GM10248 (cell line): ENCODE measurements at regions of chr19 and their contacts with region 1.

Region 1: DNA sequence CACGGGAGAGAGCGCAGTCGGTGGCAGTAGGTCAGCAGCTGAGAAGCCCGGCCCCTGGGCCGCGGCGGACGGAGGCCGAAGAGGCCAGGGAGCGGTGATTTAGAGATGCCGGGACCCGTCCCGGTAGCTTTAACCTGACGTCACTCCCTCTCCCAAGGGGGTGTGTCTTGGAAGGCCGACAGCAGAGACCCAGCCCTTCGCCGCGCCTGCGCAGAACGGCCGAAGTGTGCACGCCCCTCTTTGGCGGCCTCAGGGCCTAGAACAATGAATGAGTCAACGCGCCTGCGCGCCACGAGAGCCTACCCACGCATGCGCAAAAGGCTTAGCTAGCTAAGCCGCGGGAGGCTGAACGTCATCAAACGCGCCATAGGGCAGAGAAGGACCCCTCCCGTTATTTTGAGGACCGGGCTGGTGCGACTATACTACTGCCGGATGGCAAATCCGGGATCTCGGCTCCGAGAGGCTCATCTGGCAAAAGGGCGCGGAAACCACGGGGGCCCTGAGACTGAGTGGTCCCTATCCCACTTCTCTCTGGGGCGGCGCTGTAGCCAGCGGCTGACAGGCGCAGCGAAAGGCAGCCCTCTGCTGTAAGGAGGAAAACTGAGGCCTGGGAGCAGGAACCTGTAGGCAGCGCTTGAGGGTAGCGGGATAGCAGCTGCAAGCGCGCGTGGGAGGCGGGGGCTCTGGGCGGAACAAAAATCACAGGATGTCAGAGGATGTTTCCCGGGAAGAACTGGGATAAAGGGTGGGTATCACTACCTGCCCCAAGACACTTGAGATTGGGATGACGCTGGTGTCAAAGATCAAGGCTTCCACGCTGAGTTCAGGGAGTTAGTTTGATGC is at the starts of genes IRGQ and ZNF576:
- DNase-seq: peak; percentile 99
- CTCF ChIP-seq: no peak

Region 2: DNA sequence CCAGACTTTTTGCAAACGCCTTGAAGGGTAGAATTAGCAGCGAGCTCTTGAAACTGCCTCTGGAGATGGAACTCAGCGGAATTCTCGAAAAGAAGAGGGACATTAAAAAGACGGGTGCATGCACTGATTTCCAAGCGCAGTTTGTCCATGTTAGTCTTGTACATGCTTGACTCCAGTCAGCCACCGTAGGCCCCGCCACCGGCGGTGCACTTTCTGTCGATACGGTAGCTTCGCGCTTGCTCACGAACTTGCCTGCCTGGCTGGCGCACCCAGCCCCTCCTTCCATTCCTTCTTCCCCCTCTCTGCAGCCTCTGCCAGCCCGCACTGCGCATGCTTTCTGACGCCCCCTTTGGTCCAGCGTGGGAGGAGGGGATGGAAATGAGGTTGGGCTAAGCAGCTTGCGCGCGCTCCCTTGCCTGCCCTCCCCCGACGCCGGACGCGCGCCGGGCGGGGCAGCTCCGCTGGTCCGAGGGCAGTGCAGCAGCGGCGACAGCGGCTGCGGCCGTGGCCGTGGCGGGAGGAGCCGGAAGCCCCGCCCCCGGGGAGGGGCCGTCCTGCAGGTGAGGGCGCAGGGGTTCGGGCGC is 63.2 kb before region 1 on chr19 and contains the start of gene ZNF575:
- CTCF ChIA-PET with region 1: interaction called, 46 read pairs
- POLR2A ChIA-PET with region 1: interaction called, 4 read pairs
- DNase-seq: peak; percentile 92
- CTCF ChIP-seq: no peak

Region 3: DNA sequence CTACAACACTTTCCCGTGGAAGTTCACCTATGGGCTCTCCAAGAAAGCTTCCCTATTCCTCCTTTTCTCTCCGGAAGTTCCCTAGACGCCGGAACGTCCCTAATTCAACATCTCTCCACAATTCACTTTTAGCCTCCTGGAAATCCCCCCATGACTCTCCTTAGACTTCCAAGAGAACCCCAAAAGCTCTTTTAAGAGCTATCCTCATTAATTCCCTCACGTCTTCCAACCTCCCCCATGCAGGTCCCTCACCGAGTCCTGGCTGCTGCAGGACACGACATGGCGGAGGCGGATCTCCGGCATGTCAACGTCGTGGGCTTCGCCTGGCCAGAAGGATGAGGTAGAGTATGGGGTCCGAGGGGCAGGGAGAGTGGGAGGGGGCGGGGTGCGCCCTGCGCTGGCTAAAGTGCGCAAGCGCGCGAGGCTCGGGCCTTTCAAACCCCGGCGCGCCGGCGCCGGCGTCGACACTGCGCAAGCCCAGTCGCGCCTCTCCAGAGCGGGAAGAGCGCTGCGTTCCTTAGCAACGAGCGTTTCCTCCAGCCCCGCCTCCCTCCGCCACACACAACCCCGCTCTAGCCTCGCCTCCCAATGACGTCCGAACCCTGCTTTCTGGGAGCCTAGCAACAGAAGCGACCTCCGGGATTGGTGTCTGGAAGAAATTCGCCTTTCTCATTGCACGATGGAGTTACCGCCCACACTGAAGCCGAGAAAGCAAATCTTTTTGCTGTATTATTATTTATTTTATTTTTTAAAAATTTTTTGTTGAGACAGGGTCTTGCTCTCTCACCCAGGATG is 20.9 kb before region 1 on chr19 and contains the starts of genes PINLYP and XRCC1:
- CTCF ChIA-PET with region 1: interaction called, 11 read pairs
- POLR2A ChIA-PET with region 1: interaction called, 3 read pairs
- DNase-seq: peak; percentile 98
- CTCF ChIP-seq: no peak

Region 4: GRCh38 chr19:43584484-43584883 is 11.7 kb before region 1 on chr19:
- CTCF ChIA-PET with region 1: interaction called, 23 read pairs
- POLR2A ChIA-PET with region 1: no interaction called
- DNase-seq: no peak
- CTCF ChIP-seq: no peak

Region 5: GRCh38 chr19:43711751-43712355 is 115.6 kb after region 1 on chr19:
- CTCF ChIA-PET with region 1: no interaction called
- POLR2A ChIA-PET with region 1: no interaction called
- DNase-seq: no peak
- CTCF ChIP-seq: no peak